Ascending aorta (tissue), 2 donors: ENCODE measurements at regions of chr19 and their contacts with region 1.

Region 1: GRCh38 chr19:3035542-3036118 is 6.5 kb upstream of the TLE2 start:
- DNase-seq: peak; percentile 95 to 99
- H3K4me3 ChIP-seq: peak overlapping the region; percentile 69 to 80
- H3K27ac ChIP-seq: peak overlapping the region; percentile 88 to 94
- H3K4me1 ChIP-seq: peaks cover 0 to 8% of the 10 kb centered on the region in 2 donors
- H3K27me3 ChIP-seq: no peaks in the 10 kb centered on the region
- CTCF ChIP-seq: peak in 1 of 3 experiments; percentile 2

Region 2: GRCh38 chr19:2950286-2951124 is 85.1 kb before region 1 on chr19:
- intact Hi-C with region 1: loop called (anchors 1 kb)
- DNase-seq: peak; percentile 99 to 100
- H3K4me3 ChIP-seq: peak overlapping the region; percentile 83 to 86
- H3K27ac ChIP-seq: peak overlapping the region; percentile 97
- H3K4me1 ChIP-seq: peaks cover 6 to 10% of the 10 kb centered on the region in 2 donors
- H3K27me3 ChIP-seq: no peaks in the 10 kb centered on the region
- CTCF ChIP-seq: no peak

Region 3: DNA sequence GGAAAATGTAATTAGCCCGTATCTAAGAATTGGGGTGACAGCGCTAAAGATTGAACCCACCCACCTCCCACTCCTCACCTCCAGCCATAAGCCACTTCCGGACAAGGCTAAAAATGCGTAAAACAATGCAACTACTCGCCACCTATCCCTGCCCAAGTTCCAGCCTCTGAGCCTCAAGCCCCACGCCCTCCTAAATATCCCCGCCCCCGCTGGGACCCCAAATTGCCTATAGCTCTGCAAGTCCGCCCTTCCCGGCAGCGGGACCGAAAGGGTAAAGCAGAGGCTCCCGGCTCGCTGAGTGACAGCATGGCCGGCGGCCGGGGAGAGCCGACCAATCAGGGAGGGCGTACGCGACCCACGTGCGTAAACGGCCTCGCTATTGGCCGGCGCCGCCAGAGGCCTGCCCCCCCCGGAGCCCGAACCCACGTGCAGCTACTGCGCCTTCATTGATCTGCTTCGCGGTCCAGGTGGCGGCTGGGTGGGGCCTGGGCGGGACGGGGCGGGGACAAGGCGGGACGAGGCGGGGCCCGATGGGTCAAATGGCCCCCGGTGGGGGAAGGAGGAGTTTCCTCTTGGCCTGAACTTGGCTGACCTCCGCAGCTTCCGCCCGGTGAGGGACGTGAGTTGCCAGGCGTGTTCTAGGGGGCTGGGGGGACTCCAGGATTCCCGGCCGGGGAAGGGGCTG is 58.5 kb before region 1 on chr19 and contains the start of gene TLE6:
- intact Hi-C with region 1: loop called (anchors 2 kb)
- DNase-seq: peak; percentile 81 to 95
- H3K4me3 ChIP-seq: peak within 1 kb of the TSS; percentile 57 to 67
- H3K27ac ChIP-seq: peak within 1 kb of the TSS; percentile 44 to 50
- H3K4me1 ChIP-seq: peaks cover 15 to 24% of the 10 kb centered on the region in 2 donors
- H3K27me3 ChIP-seq: no peaks in the 10 kb centered on the region
- CTCF ChIP-seq: no peak
- total RNA-seq, gene TLE6: not detected

Region 4: DNA sequence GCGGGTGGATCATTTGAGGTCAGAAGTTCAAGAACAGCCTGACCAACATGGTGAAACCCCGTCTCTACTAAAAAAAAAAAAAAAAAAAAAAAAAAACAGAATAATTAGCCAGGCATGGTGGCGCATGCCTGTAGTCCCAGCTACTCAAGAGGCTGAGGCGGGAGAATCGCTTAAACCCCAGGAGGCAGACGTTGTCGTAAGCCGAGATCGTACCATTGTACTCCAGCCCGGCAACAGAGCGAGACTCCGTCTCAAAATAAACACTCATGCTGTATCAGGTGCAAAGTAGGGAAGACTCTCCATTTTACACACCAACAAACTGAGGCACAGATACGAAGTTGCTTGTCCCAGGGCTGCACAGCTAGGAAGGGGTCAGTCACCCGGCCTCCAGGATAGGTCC is 42.7 kb before region 1 on chr19:
- intact Hi-C with region 1: no loop called
- DNase-seq: no peak
- H3K4me3 ChIP-seq: no peak overlapping the region
- H3K27ac ChIP-seq: no peak overlapping the region
- H3K4me1 ChIP-seq: no peaks in the 10 kb centered on the region
- H3K27me3 ChIP-seq: no peaks in the 10 kb centered on the region
- CTCF ChIP-seq: no peak

Region 5: DNA sequence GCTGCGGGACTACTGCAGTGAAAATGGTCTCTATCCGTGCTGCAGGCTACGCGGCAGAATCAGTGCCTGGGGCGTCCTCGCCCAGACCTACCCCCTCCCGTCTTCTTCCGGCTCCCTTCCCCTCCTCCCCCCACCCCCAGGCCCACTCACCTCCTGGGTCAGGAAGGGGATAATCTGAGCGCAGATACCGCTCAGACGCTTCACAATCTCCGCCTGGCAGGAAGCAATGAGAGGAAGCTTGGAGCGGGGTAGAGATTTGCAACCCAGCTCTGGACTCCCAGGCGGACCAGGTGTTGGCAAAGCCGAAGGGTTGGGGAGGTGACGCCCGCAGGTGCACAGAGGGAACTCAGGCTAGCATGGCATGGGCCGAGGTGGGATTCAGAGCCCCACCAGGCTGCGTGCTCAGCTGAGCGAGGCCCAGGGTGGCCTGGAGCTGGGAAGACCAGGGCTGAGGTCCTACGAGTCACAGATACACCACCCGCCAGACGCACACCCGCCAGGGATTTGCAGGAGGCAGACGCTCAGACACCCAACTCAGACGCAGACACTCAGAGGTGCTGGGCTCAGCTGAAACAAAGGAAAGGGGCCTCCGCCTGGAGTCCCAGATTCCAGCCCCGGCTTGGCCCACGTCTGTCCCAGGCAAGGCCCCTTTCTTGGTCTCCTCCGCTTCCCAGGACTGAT is 10.6 kb before region 1 on chr19:
- intact Hi-C with region 1: no loop called
- DNase-seq: no peak
- H3K4me3 ChIP-seq: no peak overlapping the region
- H3K27ac ChIP-seq: no peak overlapping the region
- H3K4me1 ChIP-seq: peaks cover 0 to 4% of the 10 kb centered on the region in 2 donors
- H3K27me3 ChIP-seq: no peaks in the 10 kb centered on the region
- CTCF ChIP-seq: no peak

Region 6: GRCh38 chr19:3057306-3057714 is 21.7 kb after region 1 on chr19:
- intact Hi-C with region 1: loop called (anchors 1 kb)
- DNase-seq: peak; percentile 21 to 92
- H3K4me3 ChIP-seq: peak overlapping the region; percentile 25 to 28
- H3K27ac ChIP-seq: peak overlapping the region; percentile 70 to 75
- H3K4me1 ChIP-seq: peaks cover 9 to 14% of the 10 kb centered on the region in 2 donors
- H3K27me3 ChIP-seq: no peaks in the 10 kb centered on the region
- CTCF ChIP-seq: peak in 1 of 3 experiments; percentile 6

Region 7: DNA sequence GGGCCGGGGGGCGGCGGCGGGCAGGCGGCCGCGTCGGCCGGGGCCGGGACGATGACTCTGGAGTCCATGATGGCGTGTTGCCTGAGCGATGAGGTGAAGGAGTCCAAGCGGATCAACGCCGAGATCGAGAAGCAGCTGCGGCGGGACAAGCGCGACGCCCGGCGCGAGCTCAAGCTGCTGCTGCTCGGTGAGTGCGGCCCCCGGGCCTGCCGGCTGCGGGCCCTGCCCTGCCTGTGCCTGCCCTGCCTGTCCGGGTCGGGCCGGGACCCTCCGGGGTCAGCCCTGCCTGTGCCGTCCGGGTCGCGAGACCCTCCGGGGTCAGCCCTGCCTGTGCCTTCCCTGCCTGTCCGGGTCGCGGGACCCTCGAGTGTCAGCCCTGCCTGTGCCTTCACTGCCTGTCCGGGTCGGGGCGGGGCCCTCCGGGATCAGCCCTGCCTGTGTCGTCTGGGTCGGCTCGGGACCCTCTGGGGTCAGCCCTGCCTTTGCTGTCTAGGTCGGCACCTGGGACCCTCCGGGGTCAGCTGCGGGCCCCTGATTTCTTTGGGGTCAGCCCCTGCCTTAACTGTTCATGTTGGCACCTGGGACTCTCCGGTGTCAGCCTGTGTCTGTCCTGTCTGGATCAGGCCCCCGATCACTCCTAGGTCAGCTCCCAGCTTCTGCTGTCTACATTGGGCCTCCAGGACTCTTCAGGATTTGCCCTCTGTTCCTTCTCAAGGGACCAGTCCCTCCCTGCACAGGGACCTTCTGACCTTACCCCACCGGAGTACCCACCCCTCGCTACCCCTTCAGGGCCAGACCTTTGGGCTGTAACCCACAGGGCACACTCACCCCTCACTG is 59.2 kb after region 1 on chr19:
- intact Hi-C with region 1: loop called (anchors 1 kb)
- DNase-seq: no peak
- H3K4me3 ChIP-seq: peak overlapping the region; percentile 86 to 98
- H3K27ac ChIP-seq: peak overlapping the region; percentile 66 to 90
- H3K4me1 ChIP-seq: peaks cover 34 to 44% of the 10 kb centered on the region in 2 donors
- H3K27me3 ChIP-seq: no peaks in the 10 kb centered on the region
- CTCF ChIP-seq: no peak